MCF 10A (cell line): ENCODE measurements at regions of chr2 and their contacts with region 1.

Region 1: GRCh38 chr2:37585982-37586621 is 85.3 kb downstream of the CDC42EP3 start:
- DNase-seq: peak; percentile 91
- H3K4me3 Mint-ChIP-seq: peak overlapping the region; percentile 29
- H3K27ac Mint-ChIP-seq: peak overlapping the region; percentile 46
- H3K4me1 Mint-ChIP-seq: peaks cover 79% of the 10 kb centered on the region
- H3K27me3 Mint-ChIP-seq: no peaks in the 10 kb centered on the region
- CTCF ChIP-seq: no peak

Region 2: DNA sequence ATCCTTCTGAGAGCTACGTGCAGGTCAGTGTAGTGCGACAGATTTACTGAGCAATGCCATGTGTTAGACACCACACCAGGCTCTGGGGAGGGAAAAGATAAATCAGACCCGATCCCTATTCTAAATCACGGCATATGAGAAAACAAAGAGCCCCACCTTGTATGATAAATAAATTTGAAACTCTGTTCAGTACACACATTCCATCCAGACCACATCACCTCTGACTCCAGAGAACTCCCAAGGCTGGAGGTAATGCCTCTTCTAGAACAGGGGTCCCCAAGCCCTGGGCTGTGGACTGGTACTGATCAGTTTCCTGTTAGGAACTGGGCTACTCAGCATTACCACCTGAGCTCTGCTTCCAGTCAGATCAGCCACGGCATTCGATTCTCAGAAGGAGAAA is 164.4 kb before region 1 on chr2:
- CTCF ChIA-PET with region 1: no interaction called
- POLR2A ChIA-PET with region 1: no interaction called
- intact Hi-C with region 1: no loop called
- DNase-seq: no peak
- H3K4me3 Mint-ChIP-seq: no peak overlapping the region
- H3K27ac Mint-ChIP-seq: no peak overlapping the region
- H3K4me1 Mint-ChIP-seq: peaks cover 7% of the 10 kb centered on the region
- H3K27me3 Mint-ChIP-seq: no peaks in the 10 kb centered on the region
- CTCF ChIP-seq: no peak

Region 3: DNA sequence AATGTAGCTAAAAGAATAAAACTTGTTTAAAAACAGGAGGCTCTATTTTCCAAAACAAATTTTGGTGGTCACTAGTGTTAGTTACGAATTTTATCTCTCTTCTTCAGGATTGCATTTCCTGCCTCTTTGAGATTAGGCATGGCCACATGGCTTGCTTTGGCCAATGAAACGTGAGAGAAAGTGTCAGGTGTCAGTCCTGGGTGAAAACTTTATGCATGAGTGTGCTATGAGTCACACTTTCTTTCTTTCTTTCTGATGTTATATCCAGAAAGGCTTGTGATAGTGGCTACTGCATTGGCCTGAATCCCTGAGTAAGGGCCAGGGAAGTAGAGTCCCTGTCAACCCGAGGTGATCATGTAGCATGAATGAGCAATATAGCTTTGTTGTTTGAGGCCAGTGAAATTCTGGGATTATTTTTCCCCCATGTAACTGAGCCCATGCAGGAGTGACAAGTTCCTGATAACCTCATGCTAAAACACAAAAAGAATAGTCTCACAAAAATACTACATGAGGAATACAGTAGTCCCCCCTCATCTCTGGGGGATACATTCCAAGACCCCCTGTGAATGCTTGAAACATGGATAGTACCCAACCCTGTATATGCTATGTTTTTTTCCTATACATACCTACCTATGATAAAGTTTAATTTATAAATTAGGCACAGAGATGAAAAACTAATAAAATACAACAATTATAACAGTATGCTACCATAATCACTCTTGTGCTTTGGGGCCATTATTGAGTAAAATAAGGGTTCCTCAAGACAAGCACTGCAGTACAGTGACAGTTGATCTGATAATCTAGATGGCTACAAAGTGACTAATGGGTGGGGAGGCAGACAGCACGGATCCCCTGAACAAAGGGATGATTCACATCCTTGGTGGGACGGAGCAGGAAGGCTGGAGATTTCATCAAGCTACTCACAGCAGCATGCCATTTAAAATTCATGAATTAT is 24.2 kb before region 1 on chr2:
- CTCF ChIA-PET with region 1: no interaction called
- POLR2A ChIA-PET with region 1: interaction called, 11 read pairs
- intact Hi-C with region 1: no loop called
- DNase-seq: peak; percentile 93
- H3K4me3 Mint-ChIP-seq: no peak overlapping the region
- H3K27ac Mint-ChIP-seq: peak overlapping the region; percentile 87
- H3K4me1 Mint-ChIP-seq: peaks cover 26% of the 10 kb centered on the region
- H3K27me3 Mint-ChIP-seq: no peaks in the 10 kb centered on the region
- CTCF ChIP-seq: no peak

Region 4: GRCh38 chr2:37623971-37624900 is 38.1 kb after region 1 on chr2:
- CTCF ChIA-PET with region 1: interaction called, 4 read pairs
- POLR2A ChIA-PET with region 1: interaction called, 35 read pairs
- intact Hi-C with region 1: no loop called
- DNase-seq: peak; percentile 58
- H3K4me3 Mint-ChIP-seq: peak overlapping the region; percentile 0
- H3K27ac Mint-ChIP-seq: peak overlapping the region; percentile 59
- H3K4me1 Mint-ChIP-seq: peaks cover 23% of the 10 kb centered on the region
- H3K27me3 Mint-ChIP-seq: no peaks in the 10 kb centered on the region
- CTCF ChIP-seq: no peak

Region 5: GRCh38 chr2:37653805-37654378 is 67.8 kb after region 1 on chr2:
- CTCF ChIA-PET with region 1: interaction called, 3 read pairs
- POLR2A ChIA-PET with region 1: interaction called, 12 read pairs
- intact Hi-C with region 1: no loop called
- DNase-seq: peak; percentile 89
- H3K4me3 Mint-ChIP-seq: peak overlapping the region; percentile 33
- H3K27ac Mint-ChIP-seq: peak overlapping the region; percentile 97
- H3K4me1 Mint-ChIP-seq: peaks cover 75% of the 10 kb centered on the region
- H3K27me3 Mint-ChIP-seq: no peaks in the 10 kb centered on the region
- CTCF ChIP-seq: no peak